Tibial artery (tissue), 4 donors: ENCODE measurements at regions of chr7 and their contacts with region 1.

Region 1: GRCh38 chr7:90595801-90596671 is at the start of gene CDK14:
- DNase-seq: peak; percentile 75 to 86
- H3K4me3 ChIP-seq: peak within 1 kb of the TSS; percentile 67 to 91
- H3K27ac ChIP-seq: peak within 1 kb of the TSS; percentile 91 to 95
- H3K4me1 ChIP-seq: peaks cover 0 to 45% (median 7%) of the 10 kb centered on the region in 4 donors
- H3K27me3 ChIP-seq: no peaks in the 10 kb centered on the region
- CTCF ChIP-seq: peak; percentile 21 to 63

Region 2: GRCh38 chr7:91264046-91264923 is 668.2 kb after region 1 on chr7 and contains the start of gene FZD1:
- intact Hi-C with region 1: loop called (anchors 10 kb)
- DNase-seq: peak; percentile 97 to 99
- H3K4me3 ChIP-seq: peak within 1 kb of the TSS; percentile 76 to 95
- H3K27ac ChIP-seq: peak within 1 kb of the TSS; percentile 92 to 98
- H3K4me1 ChIP-seq: peaks cover 0 to 44% (median 11%) of the 10 kb centered on the region in 4 donors
- H3K27me3 ChIP-seq: no peaks in the 10 kb centered on the region
- CTCF ChIP-seq: peak in 1 of 2 experiments; percentile 18